Stomach (tissue), 19 donors: ENCODE measurements at regions of chr15 and their contacts with region 1.

Region 1: GRCh38 chr15:26376243-26376642 is 396.6 kb downstream of the GABRB3 start:
- DNase-seq: no peak
- H3K4me3 ChIP-seq: no peak overlapping the region
- H3K27ac ChIP-seq: no peak overlapping the region
- H3K4me1 ChIP-seq: no peaks in the 10 kb centered on the region
- H3K27me3 ChIP-seq: no peaks in the 10 kb centered on the region
- CTCF ChIP-seq: no peak
- EP300 ChIP-seq: no peak
- POLR2A ChIP-seq: no peak

Region 2: GRCh38 chr15:26438316-26438715 is 62.1 kb after region 1 on chr15:
- intact Hi-C with region 1: loop called (anchors 10 kb)
- DNase-seq: peak in 1 of 2 donors; percentile 29
- H3K4me3 ChIP-seq: no peak overlapping the region
- H3K27ac ChIP-seq: no peak overlapping the region
- H3K4me1 ChIP-seq: no peaks in the 10 kb centered on the region
- H3K27me3 ChIP-seq: no peaks in the 10 kb centered on the region
- CTCF ChIP-seq: no peak
- EP300 ChIP-seq: no peak
- POLR2A ChIP-seq: no peak